Natural killer cell (primary cell): ENCODE measurements at regions of chr2 and their contacts with region 1.

Region 1: DNA sequence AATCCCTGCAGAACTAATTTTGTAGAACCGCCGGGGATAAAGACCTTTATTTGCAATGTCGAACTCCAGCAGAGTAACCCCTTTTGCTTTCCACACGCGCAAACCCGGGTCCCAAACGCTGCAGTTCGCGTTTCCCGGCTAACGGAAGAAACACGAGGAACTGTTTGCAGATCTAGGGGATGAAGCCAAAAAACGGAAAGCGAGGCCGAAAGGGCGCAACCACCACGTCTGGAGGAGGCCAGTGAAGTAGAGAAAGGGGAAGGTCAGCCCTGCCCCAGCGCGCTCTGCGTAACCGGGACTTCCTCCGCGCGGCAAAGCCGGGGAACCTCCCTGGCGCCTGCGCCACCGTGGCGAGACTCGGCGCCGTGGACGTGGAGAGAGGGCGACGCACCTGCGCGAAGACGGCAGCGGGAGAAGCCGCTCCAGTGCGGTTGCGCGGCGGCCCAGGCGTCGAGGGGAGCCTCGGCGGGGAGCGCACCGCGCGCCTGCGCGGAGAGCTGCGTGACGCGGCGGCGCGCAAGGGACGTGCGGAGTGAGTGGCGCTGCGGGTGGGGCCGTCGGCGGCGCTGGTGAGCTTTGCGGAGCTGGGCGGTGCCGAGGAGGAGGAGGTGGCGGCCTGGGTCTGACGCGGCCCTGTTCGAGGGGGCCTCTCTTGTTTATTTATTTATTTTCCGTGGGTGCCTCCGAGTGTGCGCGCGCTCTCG is at the start of gene PPP1CB:
- DNase-seq: peak; percentile 96 to 100
- ATAC-seq: peak; percentile 84 to 93 (median 85)
- H3K4me3 ChIP-seq: peak within 1 kb of the TSS; percentile 92
- H3K4me3 Mint-ChIP-seq: peak within 1 kb of the TSS; percentile 97
- H3K27ac ChIP-seq: peak within 1 kb of the TSS; percentile 98
- H3K27ac Mint-ChIP-seq: peak within 1 kb of the TSS; percentile 95 to 96
- H3K4me1 ChIP-seq: peaks cover 20% of the 10 kb centered on the region
- H3K4me1 Mint-ChIP-seq: peaks cover 44 to 45% of the 10 kb centered on the region in 2 donors
- H3K27me3 ChIP-seq: no peaks in the 10 kb centered on the region
- H3K27me3 Mint-ChIP-seq: no peaks in the 10 kb centered on the region
- CTCF ChIP-seq: peak; percentile 9
- total RNA-seq, gene PPP1CB: 157 to 200 (median 181) TPM

Region 2: GRCh38 chr2:28406276-28407096 is 344.9 kb before region 1 on chr2:
- intact Hi-C with region 1: loop called (anchors 5 kb)
- DNase-seq: peak; percentile 84 to 87
- ATAC-seq: peak; percentile 61 to 85 (median 64)
- H3K4me3 ChIP-seq: no peak overlapping the region
- H3K4me3 Mint-ChIP-seq: peak overlapping the region; percentile 84
- H3K27ac ChIP-seq: peak overlapping the region; percentile 96
- H3K27ac Mint-ChIP-seq: peak overlapping the region; percentile 96 to 100
- H3K4me1 ChIP-seq: peaks cover 98% of the 10 kb centered on the region
- H3K4me1 Mint-ChIP-seq: peaks cover 60 to 64% of the 10 kb centered on the region in 2 donors
- H3K27me3 ChIP-seq: no peaks in the 10 kb centered on the region
- H3K27me3 Mint-ChIP-seq: no peaks in the 10 kb centered on the region
- CTCF ChIP-seq: peak; percentile 24

Region 3: DNA sequence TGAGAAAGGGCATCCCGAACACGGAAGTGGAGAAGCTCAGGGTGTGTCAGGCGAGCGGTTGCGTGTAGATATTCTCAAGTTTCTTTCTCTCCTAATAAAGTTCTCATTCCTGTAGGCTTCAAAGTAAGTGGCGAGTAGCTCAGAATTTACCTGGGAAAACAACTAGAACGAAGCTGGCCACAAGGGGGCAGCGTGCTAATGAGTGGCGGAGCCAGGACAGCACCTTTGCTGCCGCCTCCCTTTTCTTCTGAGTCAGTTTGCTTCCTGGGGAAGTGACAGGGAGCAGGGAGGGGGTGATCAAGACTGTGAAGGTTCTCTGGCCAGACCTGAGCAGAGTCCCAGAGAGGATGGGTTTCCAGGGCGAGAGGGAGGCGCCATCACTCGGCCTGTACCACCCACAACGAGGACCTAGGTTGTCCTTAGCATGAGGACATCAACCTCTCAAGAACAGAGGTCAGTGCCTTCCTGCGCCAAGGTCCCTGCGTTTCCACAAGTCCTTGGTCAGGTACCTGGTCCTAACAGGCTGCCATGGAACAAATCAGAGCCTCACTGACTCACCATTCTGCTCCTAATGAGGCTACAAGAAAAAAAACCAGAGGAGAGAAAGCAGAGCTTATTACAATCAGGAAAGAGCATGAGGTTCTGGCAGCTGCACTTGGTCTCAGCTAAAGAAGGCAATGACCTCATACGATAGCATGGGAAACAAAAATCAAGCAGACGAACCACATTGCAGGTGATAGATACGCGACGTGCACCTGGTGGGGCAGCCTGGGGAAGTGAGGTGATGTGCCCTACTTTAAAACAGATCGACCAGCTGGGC is 156.9 kb before region 1 on chr2:
- intact Hi-C with region 1: loop called (anchors 1 kb)
- DNase-seq: peak; percentile 79 to 93
- ATAC-seq: peak; percentile 87 to 96 (median 90)
- H3K4me3 ChIP-seq: no peak overlapping the region
- H3K4me3 Mint-ChIP-seq: peak overlapping the region; percentile 49
- H3K27ac ChIP-seq: peak overlapping the region; percentile 16
- H3K27ac Mint-ChIP-seq: peak overlapping the region; percentile 80 to 83
- H3K4me1 ChIP-seq: peaks cover 9% of the 10 kb centered on the region
- H3K4me1 Mint-ChIP-seq: peaks cover 11% of the 10 kb centered on the region in 2 donors
- H3K27me3 ChIP-seq: no peaks in the 10 kb centered on the region
- H3K27me3 Mint-ChIP-seq: peaks cover 0 to 12% of the 10 kb centered on the region in 2 donors
- CTCF ChIP-seq: peak; percentile 91

Region 4: DNA sequence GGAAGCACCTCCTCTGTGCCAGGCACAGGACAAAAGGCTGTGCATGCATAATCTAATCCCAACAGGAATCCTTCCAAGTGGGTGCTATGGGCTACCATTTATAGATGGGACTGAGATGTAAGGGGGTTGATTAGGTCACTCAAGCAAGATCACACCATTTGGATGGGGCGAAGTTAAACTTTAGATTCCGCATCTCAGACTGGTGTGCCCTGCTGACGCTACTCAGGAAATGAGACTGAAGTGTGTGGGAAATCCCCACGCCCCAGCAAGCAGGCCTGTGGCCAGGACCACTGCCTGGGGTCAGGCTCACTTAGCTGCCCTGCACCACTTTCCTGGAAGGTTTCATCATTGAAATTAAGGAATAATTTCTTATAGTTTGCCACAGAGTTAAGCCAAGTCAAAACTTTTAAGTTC is 70.2 kb before region 1 on chr2:
- intact Hi-C with region 1: loop called (anchors 1 kb)
- DNase-seq: peak; percentile 58 to 87
- ATAC-seq: peak; percentile 94 to 98 (median 95)
- H3K4me3 ChIP-seq: no peak overlapping the region
- H3K4me3 Mint-ChIP-seq: no peak overlapping the region
- H3K27ac ChIP-seq: peak overlapping the region; percentile 25
- H3K27ac Mint-ChIP-seq: peak overlapping the region; percentile 87 to 88
- H3K4me1 ChIP-seq: peaks cover 19% of the 10 kb centered on the region
- H3K4me1 Mint-ChIP-seq: peaks cover 13 to 15% of the 10 kb centered on the region in 2 donors
- H3K27me3 ChIP-seq: no peaks in the 10 kb centered on the region
- H3K27me3 Mint-ChIP-seq: no peaks in the 10 kb centered on the region
- CTCF ChIP-seq: no peak

Region 5: DNA sequence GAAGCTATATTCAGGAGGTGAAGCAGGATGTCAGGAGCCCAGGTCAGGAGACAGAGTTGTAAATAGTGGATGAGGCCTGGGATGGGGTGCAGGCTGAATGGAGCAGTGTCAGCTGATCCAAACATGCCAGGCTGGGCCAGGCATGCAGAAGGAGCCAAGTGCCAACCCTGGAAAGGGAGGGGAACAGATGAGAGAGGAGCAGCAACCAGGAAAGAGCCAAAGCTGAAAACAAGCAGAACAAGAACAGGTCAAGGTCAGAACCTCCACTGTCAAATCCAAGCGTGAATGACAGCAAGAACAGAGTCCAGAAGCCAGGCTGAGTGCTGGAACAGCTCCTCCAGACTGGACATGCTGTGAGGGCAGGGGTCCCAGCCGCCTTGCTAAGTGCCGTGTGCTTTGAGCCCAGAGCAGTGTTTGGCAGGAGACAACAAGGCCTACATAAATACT is 49.0 kb before region 1 on chr2:
- intact Hi-C with region 1: no loop called
- DNase-seq: no peak
- ATAC-seq: no peak
- H3K4me3 ChIP-seq: no peak overlapping the region
- H3K4me3 Mint-ChIP-seq: no peak overlapping the region
- H3K27ac ChIP-seq: no peak overlapping the region
- H3K27ac Mint-ChIP-seq: no peak overlapping the region
- H3K4me1 ChIP-seq: no peaks in the 10 kb centered on the region
- H3K4me1 Mint-ChIP-seq: no peaks in the 10 kb centered on the region
- H3K27me3 ChIP-seq: no peaks in the 10 kb centered on the region
- H3K27me3 Mint-ChIP-seq: no peaks in the 10 kb centered on the region
- CTCF ChIP-seq: no peak

Region 6: GRCh38 chr2:28810384-28811285 is 59.2 kb after region 1 on chr2 and contains the start of gene SPDYA:
- intact Hi-C with region 1: loop called (anchors 1 kb)
- DNase-seq: peak; percentile 83 to 89
- ATAC-seq: peak; percentile 88 to 95 (median 90)
- H3K4me3 ChIP-seq: peak within 1 kb of the TSS; percentile 55
- H3K4me3 Mint-ChIP-seq: peak within 1 kb of the TSS; percentile 89
- H3K27ac ChIP-seq: peak within 1 kb of the TSS; percentile 61
- H3K27ac Mint-ChIP-seq: peak within 1 kb of the TSS; percentile 81 to 92
- H3K4me1 ChIP-seq: peaks cover 18% of the 10 kb centered on the region
- H3K4me1 Mint-ChIP-seq: peaks cover 14 to 15% of the 10 kb centered on the region in 2 donors
- H3K27me3 ChIP-seq: no peaks in the 10 kb centered on the region
- H3K27me3 Mint-ChIP-seq: no peaks in the 10 kb centered on the region
- CTCF ChIP-seq: no peak
- total RNA-seq, gene SPDYA: 5.6 to 8.1 (median 8.0) TPM

Region 7: DNA sequence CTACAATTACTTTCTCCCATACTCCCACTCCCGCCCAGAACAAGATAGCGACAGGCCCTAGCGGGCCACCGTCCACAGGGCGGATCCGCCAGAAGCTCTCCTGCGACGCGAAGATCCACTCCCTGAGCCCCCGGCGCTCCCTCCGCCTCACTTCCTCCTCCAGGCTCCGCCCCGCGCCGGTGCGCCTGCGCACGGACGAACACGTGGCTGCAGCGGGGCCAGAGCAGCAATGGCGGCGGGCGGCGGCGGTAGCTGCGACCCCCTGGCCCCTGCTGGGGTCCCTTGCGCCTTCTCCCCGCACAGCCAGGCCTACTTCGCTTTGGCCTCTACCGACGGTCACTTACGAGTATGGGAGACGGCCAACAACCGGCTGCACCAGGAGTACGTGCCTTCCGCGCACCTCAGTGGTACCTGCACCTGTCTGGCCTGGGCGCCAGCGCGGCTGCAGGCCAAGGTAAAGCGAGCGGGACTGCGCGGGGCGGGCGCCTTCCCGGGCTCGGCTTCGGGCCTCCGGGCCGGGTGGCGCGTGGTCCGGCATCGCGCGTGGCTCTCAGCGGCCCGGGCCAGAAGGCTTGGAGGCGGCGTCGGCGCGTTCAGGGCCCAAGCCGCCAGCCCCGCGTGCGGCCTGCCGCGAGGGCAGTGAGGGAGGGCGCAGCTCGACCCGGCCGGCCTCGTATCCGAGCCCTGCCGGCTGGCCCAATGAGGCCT is 143.2 kb after region 1 on chr2 and contains the start of gene WDR43:
- intact Hi-C with region 1: loop called (anchors 10 kb)
- DNase-seq: peak; percentile 98 to 99
- ATAC-seq: peak; percentile 95 to 100 (median 96)
- H3K4me3 ChIP-seq: peak within 1 kb of the TSS; percentile 96
- H3K4me3 Mint-ChIP-seq: peak within 1 kb of the TSS; percentile 91
- H3K27ac ChIP-seq: peak within 1 kb of the TSS; percentile 76
- H3K27ac Mint-ChIP-seq: peak within 1 kb of the TSS; percentile 77 to 93
- H3K4me1 ChIP-seq: peaks cover 13% of the 10 kb centered on the region
- H3K4me1 Mint-ChIP-seq: peaks cover 29 to 32% of the 10 kb centered on the region in 2 donors
- H3K27me3 ChIP-seq: no peaks in the 10 kb centered on the region
- H3K27me3 Mint-ChIP-seq: no peaks in the 10 kb centered on the region
- CTCF ChIP-seq: no peak
- total RNA-seq, gene WDR43: 45.1 to 53.2 (median 49.1) TPM

Region 8: DNA sequence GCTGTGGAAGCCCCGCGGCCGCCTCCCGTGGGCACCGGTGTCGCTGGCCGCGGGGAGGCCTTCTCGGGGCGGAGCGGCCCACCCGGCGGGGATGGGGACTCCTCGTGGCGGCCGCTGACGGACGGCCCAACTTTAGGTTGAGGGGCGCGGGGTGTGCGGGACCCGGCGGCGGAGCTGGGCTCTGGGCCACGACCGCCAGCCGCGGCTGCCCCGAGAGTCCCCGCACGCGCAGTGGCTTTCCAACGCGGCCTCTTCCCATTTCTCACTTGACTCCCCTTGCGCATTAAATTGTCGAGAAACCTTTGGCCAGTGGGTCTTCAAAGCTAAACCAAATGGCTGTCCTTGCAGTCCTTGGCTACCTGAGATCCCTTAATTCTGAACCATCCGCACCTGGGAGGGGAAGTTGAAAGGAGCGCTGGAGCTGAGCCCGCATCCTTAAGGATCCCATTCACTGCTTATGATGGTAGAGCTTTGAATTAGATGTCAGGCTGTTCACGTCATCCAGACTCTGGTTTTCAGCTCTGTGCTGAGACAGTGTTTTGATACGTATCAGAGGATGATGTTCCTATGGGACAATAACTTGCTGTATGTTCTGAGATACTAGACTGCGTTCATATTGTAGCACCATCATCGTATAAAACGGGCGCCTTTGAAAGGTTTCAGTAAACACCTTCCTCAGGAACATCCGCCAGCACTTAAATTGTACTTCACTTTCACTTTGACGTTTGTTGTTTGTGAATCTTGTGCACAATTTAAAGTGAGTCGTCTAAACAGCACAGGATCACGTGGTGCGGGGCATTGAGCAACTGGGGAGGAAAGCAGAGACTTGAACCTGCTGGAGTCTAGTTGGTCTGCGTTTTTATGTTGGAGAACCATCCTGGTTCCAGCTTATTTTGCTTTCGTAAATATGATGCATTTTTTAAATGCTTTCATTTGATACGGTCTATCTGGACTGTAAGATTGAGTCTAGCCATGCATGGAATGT is 364.7 kb after region 1 on chr2:
- intact Hi-C with region 1: loop called (anchors 5 kb)
- DNase-seq: peak; percentile 65 to 86
- ATAC-seq: peak; percentile 51 to 64 (median 59)
- H3K4me3 ChIP-seq: peak overlapping the region; percentile 88
- H3K4me3 Mint-ChIP-seq: peak overlapping the region; percentile 91
- H3K27ac ChIP-seq: peak overlapping the region; percentile 95
- H3K27ac Mint-ChIP-seq: peak overlapping the region; percentile 93
- H3K4me1 ChIP-seq: peaks cover 14% of the 10 kb centered on the region
- H3K4me1 Mint-ChIP-seq: peaks cover 45 to 59% of the 10 kb centered on the region in 2 donors
- H3K27me3 ChIP-seq: no peaks in the 10 kb centered on the region
- H3K27me3 Mint-ChIP-seq: peaks cover 0 to 9% of the 10 kb centered on the region in 2 donors
- CTCF ChIP-seq: no peak